Astrocyte of the cerebellum (primary cell): ENCODE measurements at regions of chr12 and their contacts with region 1.

Region 1: DNA sequence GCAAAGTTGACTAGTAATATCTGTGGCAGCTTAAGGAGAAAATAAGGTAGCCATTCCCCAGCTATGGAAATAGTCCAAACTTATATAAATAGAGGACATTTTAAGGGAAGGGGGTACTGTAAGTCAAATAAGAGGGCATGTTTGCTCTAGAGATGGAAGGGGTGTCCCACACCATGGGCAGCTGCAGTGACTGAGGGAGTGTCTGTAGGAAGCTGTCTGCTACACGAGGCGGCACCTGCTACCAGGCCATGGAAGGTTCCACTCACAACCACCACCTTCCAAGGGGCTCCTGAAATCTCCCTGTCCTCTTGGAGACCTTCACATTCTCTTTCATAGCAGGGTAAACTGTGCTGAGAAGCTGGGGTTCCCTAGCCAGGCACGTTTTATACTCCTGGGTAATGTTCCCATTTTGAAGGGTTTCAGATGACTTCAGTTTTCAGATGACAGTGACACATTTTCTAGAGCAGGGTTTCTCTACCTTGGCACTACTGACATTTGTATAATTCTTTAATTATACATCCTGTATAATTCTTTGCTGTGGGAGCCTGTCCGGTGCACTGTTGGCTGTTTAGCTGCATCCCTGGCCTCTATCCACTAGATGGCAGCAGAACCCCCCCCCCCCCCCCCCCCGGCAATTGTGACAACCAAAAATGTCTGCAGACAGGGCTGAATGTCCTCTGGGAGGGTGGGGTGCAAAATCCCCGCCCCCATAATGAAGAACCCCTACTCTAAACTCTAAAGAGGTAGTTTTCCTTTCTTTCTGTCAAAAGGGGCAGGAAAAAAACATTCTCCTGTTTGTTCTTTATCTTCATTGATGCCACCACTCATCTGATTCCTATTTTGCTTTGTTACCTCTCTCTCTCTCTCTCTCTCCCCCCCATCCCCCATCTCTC is 11.6 kb upstream of the SMCO2 start:
- DNase-seq: no peak
- H3K4me3 ChIP-seq: no peak overlapping the region
- CTCF ChIP-seq: peak; percentile 61

Region 2: GRCh38 chr12:27359578-27360340 is 75.2 kb before region 1 on chr12:
- in situ Hi-C with region 1: no loop called
- DNase-seq: no peak
- H3K4me3 ChIP-seq: no peak overlapping the region
- CTCF ChIP-seq: no peak

Region 3: DNA sequence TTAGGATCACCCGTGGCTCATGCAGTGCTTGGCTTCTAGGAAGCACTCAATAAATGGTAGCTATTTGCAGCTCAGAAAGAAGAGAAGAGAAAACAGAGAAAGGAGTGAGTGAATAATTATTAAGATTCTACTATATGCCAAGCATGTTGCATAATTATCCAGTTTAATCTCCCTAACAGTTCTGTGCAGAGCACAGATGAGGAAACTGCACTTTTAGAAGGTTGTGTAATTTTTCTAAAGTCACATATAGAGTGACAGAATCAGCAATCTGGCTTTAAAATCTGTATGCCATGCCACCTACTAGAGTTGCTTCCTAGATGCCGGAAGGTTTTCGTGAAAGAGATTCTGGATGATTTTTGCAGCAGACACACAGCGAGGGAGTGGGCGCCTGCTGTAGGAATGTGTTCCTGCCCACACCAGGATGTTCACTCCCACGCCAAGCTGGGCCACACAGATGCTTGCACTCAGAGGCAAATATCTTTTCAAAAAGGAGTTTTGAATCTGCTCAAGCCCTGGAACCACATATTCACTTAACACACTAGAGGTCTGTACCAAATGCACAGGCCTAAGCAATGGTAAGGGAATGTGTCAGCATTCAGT is 38.6 kb before region 1 on chr12:
- in situ Hi-C with region 1: loop called (anchors 5 kb)
- DNase-seq: no peak
- H3K4me3 ChIP-seq: no peak overlapping the region
- CTCF ChIP-seq: no peak

Region 4: GRCh38 chr12:27498149-27498548 is 63.2 kb after region 1 on chr12:
- in situ Hi-C with region 1: loop called (anchors 10 kb)
- DNase-seq: no peak
- H3K4me3 ChIP-seq: no peak overlapping the region
- CTCF ChIP-seq: no peak

Region 5: DNA sequence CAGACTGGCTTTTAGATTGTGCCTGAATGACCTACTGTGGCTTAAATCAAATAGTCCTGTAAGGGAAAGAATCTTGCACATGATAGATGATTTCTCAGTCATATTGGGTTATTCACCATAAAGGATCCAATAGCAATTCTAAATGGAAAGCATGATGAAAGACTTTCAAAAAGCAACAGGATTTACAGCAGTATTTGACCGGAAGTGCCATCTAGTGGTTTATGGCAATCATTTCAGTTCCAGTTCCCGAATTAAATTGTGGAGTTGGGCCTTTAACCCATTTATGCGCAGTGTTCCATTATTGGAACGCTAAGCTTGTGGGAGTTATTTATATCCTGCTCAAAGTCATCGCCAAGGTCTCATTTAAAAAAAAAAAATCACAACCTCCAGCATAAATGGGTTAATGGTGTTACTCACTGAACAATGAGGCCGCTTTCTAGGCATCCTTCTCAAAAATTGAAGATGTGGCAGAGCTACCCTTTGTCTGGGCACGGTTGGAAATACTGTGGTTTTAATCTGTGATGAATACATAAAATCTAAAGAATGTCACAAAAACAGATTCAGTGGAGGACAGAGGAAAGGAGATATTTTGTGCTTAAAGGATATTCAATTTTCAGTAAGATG is 200.5 kb after region 1 on chr12:
- in situ Hi-C with region 1: loop called (anchors 10 kb)
- DNase-seq: peak; percentile 58
- H3K4me3 ChIP-seq: no peak overlapping the region
- CTCF ChIP-seq: peak; percentile 60